ENCODE measurements at regions of chr7 and their contacts with region 1.

Region 1: GRCh38 chr7:132709971-132710567 is 133.8 kb upstream of the PLXNA4 start:
- DNase-seq: peak in 1 of 5 donors; percentile 11
- ATAC-seq: no peak
- H3K4me3 ChIP-seq: no peak overlapping the region
- H3K27ac ChIP-seq: no peak overlapping the region
- H3K4me1 ChIP-seq: no peaks in the 10 kb centered on the region
- H3K27me3 ChIP-seq: no peaks in the 10 kb centered on the region
- CTCF ChIP-seq: peak; percentile 20 to 61 (median 42)
- POLR2A ChIP-seq: no peak

Region 2: DNA sequence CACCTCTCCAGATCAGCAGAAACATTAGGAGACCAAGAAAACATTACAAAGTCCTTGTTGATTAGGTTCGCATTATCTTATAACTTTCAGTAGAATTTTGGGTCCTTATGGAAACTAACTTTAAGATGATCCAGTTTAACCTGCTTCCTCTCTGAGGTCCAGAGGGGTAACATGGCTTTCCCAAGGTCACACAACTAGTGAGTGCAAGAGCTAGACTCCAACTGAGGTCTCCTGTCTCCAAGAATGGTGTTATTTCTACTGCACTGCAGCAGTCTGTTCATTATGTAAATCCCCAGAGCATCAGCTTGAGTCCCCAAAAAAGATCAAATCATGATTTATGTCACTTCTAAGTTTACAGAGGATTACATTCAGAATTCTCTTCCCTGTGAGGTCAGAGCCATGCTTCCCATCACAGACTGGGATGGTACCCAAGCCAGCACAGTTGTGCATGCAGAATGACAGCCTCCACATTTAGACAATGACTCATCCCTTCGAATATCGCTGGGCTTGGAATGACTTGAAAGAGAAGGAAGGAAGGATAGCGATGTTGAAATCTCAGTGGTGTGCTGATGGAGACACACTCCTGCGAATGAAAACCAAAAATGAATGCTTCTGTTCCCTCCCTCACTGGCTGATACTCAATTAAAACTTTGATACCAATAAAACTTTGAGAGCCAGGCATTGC is 29.3 kb after region 1 on chr7:
- intact Hi-C with region 1: no loop called
- DNase-seq: peak in 4 of 5 donors; percentile 33 to 63 (median 47)
- ATAC-seq: peak; percentile 94 to 97 (median 96)
- H3K4me3 ChIP-seq: no peak overlapping the region
- H3K27ac ChIP-seq: peak overlapping the region in 1 of 12 donors; percentile 4
- H3K4me1 ChIP-seq: peaks cover 0 to 17% (median 0%) of the 10 kb centered on the region in 12 donors
- H3K27me3 ChIP-seq: no peaks in the 10 kb centered on the region
- CTCF ChIP-seq: no peak
- POLR2A ChIP-seq: no peak

Region 3: GRCh38 chr7:132919771-132920170 is 209.7 kb after region 1 on chr7:
- intact Hi-C with region 1: no loop called
- DNase-seq: no peak
- ATAC-seq: no peak
- H3K4me3 ChIP-seq: no peak overlapping the region
- H3K27ac ChIP-seq: no peak overlapping the region
- H3K4me1 ChIP-seq: no peaks in the 10 kb centered on the region
- H3K27me3 ChIP-seq: no peaks in the 10 kb centered on the region
- CTCF ChIP-seq: no peak
- POLR2A ChIP-seq: no peak

Region 4: GRCh38 chr7:133442818-133443217 is 732.7 kb after region 1 on chr7:
- intact Hi-C with region 1: loop called in 1 of 10 experiments (anchors 10 kb)
- DNase-seq: no peak
- ATAC-seq: no peak
- H3K4me3 ChIP-seq: no peak overlapping the region
- H3K27ac ChIP-seq: no peak overlapping the region
- H3K4me1 ChIP-seq: peaks cover 0 to 2% (median 0%) of the 10 kb centered on the region in 12 donors
- H3K27me3 ChIP-seq: no peaks in the 10 kb centered on the region
- CTCF ChIP-seq: no peak
- POLR2A ChIP-seq: no peak

Region 5: DNA sequence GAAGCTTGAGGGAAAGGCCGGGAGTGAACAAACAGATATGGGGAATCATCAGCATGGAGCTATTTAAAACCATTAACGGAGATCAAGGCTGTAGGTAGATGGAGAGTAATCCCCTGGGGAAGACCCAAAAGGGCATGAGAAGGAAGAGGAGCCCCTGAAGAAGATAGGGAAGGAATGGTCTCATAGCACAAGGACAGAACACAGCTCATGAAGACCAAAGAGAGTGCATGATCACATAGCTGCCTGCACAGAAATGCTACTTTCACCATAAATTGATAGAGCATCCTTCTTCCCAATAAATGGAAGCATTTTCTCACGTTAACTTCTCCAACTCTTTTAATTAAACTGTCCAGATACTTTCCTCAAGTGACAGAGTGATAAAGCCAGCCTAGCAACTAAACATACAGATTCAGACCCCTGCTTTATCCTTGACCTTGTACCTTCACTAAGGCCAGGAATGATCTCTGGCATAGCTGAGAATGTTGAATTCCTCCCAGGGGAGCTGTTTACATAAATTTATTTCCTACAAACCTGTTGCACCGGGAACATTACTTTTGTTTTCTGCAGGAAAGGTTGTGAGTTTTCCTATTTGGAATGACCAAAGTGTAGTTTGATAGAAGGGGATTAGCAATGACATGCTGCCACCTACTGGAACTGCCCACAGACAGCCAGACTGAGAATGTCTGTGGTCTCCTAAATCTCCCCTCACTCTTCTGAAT is 1306.3 kb after region 1 on chr7:
- intact Hi-C with region 1: loop called in 1 of 10 experiments (anchors 10 kb)
- DNase-seq: peak in 2 of 5 donors; percentile 18 to 29
- ATAC-seq: peak in 3 of 4 donors; percentile 48 to 69 (median 56)
- H3K4me3 ChIP-seq: no peak overlapping the region
- H3K27ac ChIP-seq: no peak overlapping the region
- H3K4me1 ChIP-seq: peaks cover 0 to 4% (median 0%) of the 10 kb centered on the region in 12 donors
- H3K27me3 ChIP-seq: no peaks in the 10 kb centered on the region
- CTCF ChIP-seq: peak; percentile 45 to 77 (median 72)
- POLR2A ChIP-seq: no peak

Measured in heart left ventricle (tissue), 16 donors.